Naive thymus-derived CD8-positive, alpha-beta T cell (primary cell): ENCODE measurements at regions of chrX and their contacts with region 1.

Region 1: GRCh38 chrX:19747652-19748610 is 139.5 kb downstream of the SH3KBP1 start:
- DNase-seq: peak; percentile 45 to 91 (median 77)
- ATAC-seq: peak; percentile 76 to 86
- H3K4me3 Mint-ChIP-seq: peak overlapping the region; percentile 44 to 79 (median 68)
- H3K27ac Mint-ChIP-seq: peak overlapping the region; percentile 93 to 99 (median 98)
- H3K4me1 Mint-ChIP-seq: peaks cover 16 to 99% (median 85%) of the 10 kb centered on the region in 4 donors
- H3K27me3 Mint-ChIP-seq: no peaks in the 10 kb centered on the region

Region 2: GRCh38 chrX:19695884-19696283 is 52.0 kb before region 1 on chrX:
- POLR2A ChIA-PET with region 1: no interaction called
- DNase-seq: no peak
- ATAC-seq: no peak
- H3K4me3 Mint-ChIP-seq: no peak overlapping the region
- H3K27ac Mint-ChIP-seq: peak overlapping the region in 2 of 10 donors; percentile 28 to 32
- H3K4me1 Mint-ChIP-seq: peaks cover 8 to 32% (median 19%) of the 10 kb centered on the region in 4 donors
- H3K27me3 Mint-ChIP-seq: no peaks in the 10 kb centered on the region

Region 3: GRCh38 chrX:19772826-19773628 is 25.1 kb after region 1 on chrX:
- POLR2A ChIA-PET with region 1: interaction called, 18 read pairs
- DNase-seq: no peak
- ATAC-seq: peak in 1 of 2 donors; percentile 48
- H3K4me3 Mint-ChIP-seq: peak overlapping the region; percentile 30 to 71 (median 63)
- H3K27ac Mint-ChIP-seq: peak overlapping the region; percentile 42 to 92 (median 88)
- H3K4me1 Mint-ChIP-seq: peaks cover 24 to 84% (median 68%) of the 10 kb centered on the region in 4 donors
- H3K27me3 Mint-ChIP-seq: no peaks in the 10 kb centered on the region

Region 4: DNA sequence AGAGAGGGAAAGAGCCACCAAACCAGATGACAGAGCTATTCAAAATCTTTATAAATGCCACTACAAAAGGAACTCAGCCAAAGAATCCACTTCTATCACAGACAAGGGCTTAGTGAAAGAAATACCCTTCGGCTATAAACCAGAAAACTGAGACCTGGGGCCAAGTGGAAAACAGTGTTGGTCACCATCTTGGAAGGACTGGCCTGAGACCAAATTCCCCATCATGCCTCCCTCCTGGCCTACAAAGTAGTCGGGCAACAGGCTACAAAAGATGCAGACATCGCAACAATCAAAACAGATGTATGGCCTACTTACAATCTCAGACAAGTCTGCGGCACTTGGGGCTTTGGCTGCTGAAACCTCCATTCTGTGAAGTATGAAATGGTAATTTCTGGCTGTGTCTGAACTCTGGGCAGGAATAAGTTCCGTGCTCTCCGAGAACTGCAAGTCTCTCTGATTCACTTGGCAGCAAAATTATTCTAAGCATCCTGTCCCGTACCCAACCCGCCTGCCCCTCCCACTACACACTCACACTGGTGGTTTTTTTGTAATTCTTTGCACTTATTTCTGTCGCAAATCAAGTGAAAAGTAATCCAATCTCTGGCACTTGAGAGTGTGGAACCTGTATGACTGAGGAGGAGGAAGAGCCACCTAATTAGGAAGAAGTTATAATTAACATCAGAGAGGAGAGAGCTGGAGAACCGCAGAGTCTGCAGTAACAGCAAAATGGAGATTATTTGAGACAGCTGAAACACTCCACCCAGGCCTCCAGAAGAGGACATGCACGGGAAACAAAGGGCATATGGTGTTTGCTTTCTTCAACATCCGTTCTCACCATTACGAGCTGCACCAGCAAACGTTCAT is 51.6 kb after region 1 on chrX:
- POLR2A ChIA-PET with region 1: interaction called, 43 read pairs
- DNase-seq: peak in 8 of 10 donors; percentile 22 to 71 (median 48)
- ATAC-seq: peak; percentile 79 to 83
- H3K4me3 Mint-ChIP-seq: peak overlapping the region; percentile 82 to 98 (median 94)
- H3K27ac Mint-ChIP-seq: peak overlapping the region; percentile 88 to 98 (median 94)
- H3K4me1 Mint-ChIP-seq: peaks cover 22 to 77% (median 64%) of the 10 kb centered on the region in 4 donors
- H3K27me3 Mint-ChIP-seq: no peaks in the 10 kb centered on the region

Region 5: GRCh38 chrX:19805046-19805690 is 57.2 kb after region 1 on chrX:
- POLR2A ChIA-PET with region 1: interaction called, 43 read pairs
- DNase-seq: peak in 6 of 10 donors; percentile 14 to 64 (median 49)
- ATAC-seq: peak; percentile 84 to 94
- H3K4me3 Mint-ChIP-seq: peak overlapping the region; percentile 59 to 83 (median 70)
- H3K27ac Mint-ChIP-seq: peak overlapping the region in 9 of 10 donors; percentile 78 to 94 (median 87)
- H3K4me1 Mint-ChIP-seq: peaks cover 11 to 67% (median 44%) of the 10 kb centered on the region in 4 donors
- H3K27me3 Mint-ChIP-seq: no peaks in the 10 kb centered on the region